Breast epithelium (tissue), 4 donors: ENCODE measurements at regions of chr2 and their contacts with region 1.

Region 1: GRCh38 chr2:52995424-52995823 is 772.2 kb upstream of the CHAC2 start:
- DNase-seq: no peak
- H3K4me3 ChIP-seq: no peak overlapping the region
- H3K27ac ChIP-seq: no peak overlapping the region
- H3K4me1 ChIP-seq: no peaks in the 10 kb centered on the region
- H3K27me3 ChIP-seq: no peaks in the 10 kb centered on the region
- CTCF ChIP-seq: no peak
- POLR2A ChIP-seq: no peak

Region 2: GRCh38 chr2:52064237-52064636 is 931.2 kb before region 1 on chr2:
- intact Hi-C with region 1: loop called (anchors 5 kb)
- DNase-seq: no peak
- H3K4me3 ChIP-seq: no peak overlapping the region
- H3K27ac ChIP-seq: no peak overlapping the region
- H3K4me1 ChIP-seq: no peaks in the 10 kb centered on the region
- H3K27me3 ChIP-seq: no peaks in the 10 kb centered on the region
- CTCF ChIP-seq: no peak
- POLR2A ChIP-seq: no peak